ENCODE measurements at regions of chr17 and their contacts with region 1.

Region 1: DNA sequence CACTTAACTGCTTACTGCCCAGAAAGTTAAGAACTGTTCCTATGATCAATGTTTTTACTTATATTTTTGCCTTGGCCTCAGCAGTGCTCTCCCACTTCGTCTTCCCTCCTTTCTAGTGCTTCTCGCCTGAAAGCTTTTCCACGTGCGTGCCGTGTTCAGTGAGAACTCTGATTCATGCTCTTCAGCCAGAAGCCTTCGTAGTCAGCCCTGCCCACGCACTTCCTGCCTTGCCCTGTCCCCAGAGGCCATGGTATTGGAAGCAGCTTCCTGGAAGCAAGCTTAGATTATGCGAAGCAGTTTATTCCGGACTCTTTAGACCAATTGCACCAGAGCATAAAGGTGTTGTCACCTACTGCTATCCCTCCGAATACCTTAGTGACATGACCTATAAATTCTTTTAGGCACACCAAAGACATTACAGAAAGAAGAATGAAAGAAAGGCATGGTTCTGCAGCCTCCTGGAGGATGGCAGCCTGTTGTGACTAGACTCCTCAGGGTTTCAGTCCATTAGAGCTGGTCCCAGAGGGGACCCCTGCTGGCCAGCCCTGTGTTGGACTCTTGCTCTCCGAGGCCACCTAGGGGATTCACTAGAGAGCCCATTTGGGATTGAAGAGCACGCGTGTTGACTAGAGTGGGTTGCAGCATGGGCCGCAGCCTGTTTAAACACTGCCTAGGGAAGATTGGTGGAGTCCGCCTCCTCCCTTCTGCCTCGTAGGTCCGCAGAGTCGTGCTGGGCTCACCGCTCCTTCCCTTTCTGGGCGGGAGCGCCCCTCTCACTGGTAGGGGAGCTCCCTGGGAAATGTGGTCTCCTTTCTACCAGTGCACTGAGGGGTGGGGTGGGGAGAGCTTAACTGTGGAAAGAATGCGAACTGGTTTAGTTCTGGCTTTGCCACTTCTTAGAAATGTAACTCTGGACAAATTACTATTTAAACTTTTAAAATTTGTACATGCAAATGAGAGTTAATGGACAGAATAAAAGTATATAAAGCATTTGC is 105.3 kb downstream of the RPTOR start:
- DNase-seq: peak; percentile 87 to 89 (median 88)
- ATAC-seq: peak; percentile 79 to 97
- H3K4me3 ChIP-seq: no peak overlapping the region
- H3K27ac ChIP-seq: no peak overlapping the region
- H3K4me1 ChIP-seq: peaks cover 18% of the 10 kb centered on the region
- H3K27me3 ChIP-seq: no peaks in the 10 kb centered on the region

Region 2: DNA sequence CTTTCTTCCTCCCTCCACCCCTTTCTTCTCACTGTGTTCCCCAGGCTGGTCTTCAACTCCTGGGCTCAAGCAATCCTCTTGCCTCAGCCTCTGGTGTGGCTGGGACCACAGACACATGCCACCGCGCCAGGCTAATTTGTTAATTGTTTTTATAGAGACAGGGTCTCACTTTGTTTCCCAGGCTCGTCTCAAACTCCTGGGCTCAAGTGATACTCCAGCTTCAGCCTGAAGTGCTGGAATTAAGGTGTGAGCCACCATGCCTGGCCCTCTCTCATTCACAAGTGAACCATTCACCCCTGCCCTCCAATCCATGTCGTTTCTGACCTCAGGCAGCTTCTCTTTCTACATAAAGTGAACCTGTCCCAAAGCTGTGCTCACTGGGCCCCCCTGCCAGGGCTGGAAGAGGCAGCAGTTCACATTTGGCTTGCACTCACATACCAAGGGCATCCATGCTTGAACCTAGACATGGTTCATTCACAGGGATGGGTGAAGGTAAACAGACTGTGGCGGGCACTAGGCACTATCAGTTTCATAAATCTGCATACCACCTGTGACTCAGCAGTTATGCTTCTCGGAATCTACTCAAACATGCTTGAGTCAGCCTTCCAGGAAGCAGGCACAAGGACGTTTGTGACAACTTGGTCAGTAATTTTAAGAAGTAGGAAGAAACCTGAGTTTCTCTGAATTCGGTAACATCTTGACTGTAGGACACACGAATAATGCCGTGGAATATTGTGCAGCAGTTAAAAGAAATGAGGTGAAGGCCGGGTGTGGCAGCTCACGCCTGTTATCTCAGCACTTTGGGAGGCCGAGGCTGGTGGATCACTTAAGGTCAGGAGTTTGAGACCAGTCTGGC is 395.4 kb before region 1 on chr17:
- intact Hi-C with region 1: loop called in 1 of 4 experiments (anchors 10 kb)
- DNase-seq: peak in 2 of 3 donors; percentile 9 to 25
- ATAC-seq: peak in 1 of 2 donors; percentile 37
- H3K4me3 ChIP-seq: no peak overlapping the region
- H3K27ac ChIP-seq: no peak overlapping the region
- H3K4me1 ChIP-seq: no peaks in the 10 kb centered on the region
- H3K27me3 ChIP-seq: no peaks in the 10 kb centered on the region

Region 3: GRCh38 chr17:80529104-80529903 is 120.7 kb before region 1 on chr17:
- intact Hi-C with region 1: no loop called
- DNase-seq: no peak
- ATAC-seq: no peak
- H3K4me3 ChIP-seq: no peak overlapping the region
- H3K27ac ChIP-seq: no peak overlapping the region
- H3K4me1 ChIP-seq: no peaks in the 10 kb centered on the region
- H3K27me3 ChIP-seq: no peaks in the 10 kb centered on the region

Region 4: GRCh38 chr17:80605326-80606066 is 44.5 kb before region 1 on chr17:
- intact Hi-C with region 1: no loop called
- DNase-seq: no peak
- ATAC-seq: no peak
- H3K4me3 ChIP-seq: no peak overlapping the region
- H3K27ac ChIP-seq: no peak overlapping the region
- H3K4me1 ChIP-seq: peaks cover 2% of the 10 kb centered on the region
- H3K27me3 ChIP-seq: no peaks in the 10 kb centered on the region

Region 5: GRCh38 chr17:80886641-80887573 is 236.9 kb after region 1 on chr17:
- intact Hi-C with region 1: no loop called
- DNase-seq: no peak
- ATAC-seq: no peak
- H3K4me3 ChIP-seq: no peak overlapping the region
- H3K27ac ChIP-seq: no peak overlapping the region
- H3K4me1 ChIP-seq: peaks cover 3% of the 10 kb centered on the region
- H3K27me3 ChIP-seq: no peaks in the 10 kb centered on the region

Region 6: DNA sequence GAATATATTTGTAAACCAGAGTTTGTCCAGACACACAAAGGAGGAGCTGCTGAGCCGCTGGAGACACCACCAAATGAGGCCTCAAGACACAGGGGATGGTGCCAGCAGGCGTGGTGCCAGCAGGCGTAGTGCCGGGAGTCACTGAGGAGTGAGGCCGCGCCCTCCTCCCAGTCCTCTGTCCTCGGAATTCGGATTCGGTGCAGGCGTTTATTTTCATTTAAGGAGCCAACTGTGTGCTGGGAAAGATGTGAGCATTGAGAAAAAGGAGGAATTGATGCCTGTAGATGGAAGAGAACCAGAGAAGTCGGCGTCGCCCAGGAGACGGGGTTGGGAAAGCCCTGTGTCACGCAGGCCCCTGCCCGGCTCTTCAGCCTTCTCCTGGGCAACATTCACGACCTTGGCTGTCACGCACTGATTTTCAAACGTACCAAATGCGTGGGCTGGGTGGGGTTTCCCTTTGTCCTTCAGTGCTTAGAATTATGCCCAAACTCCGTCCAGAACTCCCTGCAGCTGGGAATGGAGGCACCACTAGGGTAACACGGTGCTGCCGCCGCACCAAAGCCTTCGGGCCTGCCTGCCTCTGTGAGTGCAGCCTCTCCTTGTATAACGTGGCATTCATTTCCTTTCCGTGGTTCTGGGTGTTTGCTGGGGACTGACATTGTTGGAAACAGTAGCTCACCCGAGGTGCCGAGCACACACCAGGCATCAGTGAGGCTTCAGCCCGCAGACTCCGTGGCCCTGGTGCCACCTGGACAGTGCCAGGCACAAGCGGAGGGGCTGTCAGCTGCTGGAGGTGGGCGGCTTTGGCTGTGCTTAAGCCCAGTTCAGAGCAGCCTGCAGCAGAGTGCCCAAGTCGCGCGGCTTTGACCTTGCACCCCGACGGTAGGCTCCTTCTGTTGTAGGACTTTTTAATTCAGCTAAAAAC is 292.7 kb after region 1 on chr17:
- intact Hi-C with region 1: no loop called
- DNase-seq: peak; percentile 96 to 99 (median 99)
- ATAC-seq: peak; percentile 94 to 95
- H3K4me3 ChIP-seq: no peak overlapping the region
- H3K27ac ChIP-seq: no peak overlapping the region
- H3K4me1 ChIP-seq: peaks cover 4% of the 10 kb centered on the region
- H3K27me3 ChIP-seq: no peaks in the 10 kb centered on the region

Measured in right cardiac atrium (tissue), 5 donors.